ENCODE measurements at regions of chr3 and their contacts with region 1.

Region 1: DNA sequence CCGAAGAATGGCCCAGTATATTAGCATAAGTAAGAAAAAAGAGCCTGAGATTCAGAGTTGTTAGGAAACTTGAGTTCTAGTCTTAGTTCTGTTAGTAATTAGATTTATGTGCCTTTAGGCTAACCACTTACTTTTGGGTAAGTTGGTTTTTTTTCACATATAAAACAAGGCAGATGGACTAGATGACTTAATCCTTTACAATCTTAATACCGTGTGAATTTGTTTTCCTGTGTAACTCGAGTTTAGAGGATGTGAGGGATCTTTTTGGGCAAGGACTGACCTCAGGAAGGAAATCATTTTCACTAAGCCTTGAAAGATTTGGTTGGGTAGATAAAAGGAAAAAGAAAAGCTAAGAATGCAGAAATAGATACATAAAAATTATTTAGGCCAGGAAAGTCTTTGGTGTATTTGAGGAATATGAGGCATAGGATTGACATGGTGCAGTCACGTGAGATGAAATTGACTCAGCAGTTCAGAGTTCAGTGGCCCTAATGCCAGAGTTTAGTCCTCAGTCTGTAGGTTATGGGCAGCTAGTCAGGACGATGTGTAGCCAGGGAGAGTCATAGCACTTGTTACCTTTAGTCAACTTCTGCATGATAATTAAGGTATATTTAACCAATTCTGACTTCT is 34.6 kb downstream of the PAK2 start:
- DNase-seq: peak in 1 of 14 experiments; percentile 27
- ATAC-seq: no peak
- H3K4me3 ChIP-seq: no peak overlapping the region
- H3K4me3 Mint-ChIP-seq: peak overlapping the region; percentile 9
- H3K27ac ChIP-seq: no peak overlapping the region
- H3K27ac Mint-ChIP-seq: peak overlapping the region; percentile 35
- H3K4me1 ChIP-seq: peaks cover 33% of the 10 kb centered on the region
- H3K4me1 Mint-ChIP-seq: peaks cover 83% of the 10 kb centered on the region
- H3K27me3 ChIP-seq: no peaks in the 10 kb centered on the region
- H3K27me3 Mint-ChIP-seq: no peaks in the 10 kb centered on the region
- CTCF ChIP-seq: no peak

Region 2: DNA sequence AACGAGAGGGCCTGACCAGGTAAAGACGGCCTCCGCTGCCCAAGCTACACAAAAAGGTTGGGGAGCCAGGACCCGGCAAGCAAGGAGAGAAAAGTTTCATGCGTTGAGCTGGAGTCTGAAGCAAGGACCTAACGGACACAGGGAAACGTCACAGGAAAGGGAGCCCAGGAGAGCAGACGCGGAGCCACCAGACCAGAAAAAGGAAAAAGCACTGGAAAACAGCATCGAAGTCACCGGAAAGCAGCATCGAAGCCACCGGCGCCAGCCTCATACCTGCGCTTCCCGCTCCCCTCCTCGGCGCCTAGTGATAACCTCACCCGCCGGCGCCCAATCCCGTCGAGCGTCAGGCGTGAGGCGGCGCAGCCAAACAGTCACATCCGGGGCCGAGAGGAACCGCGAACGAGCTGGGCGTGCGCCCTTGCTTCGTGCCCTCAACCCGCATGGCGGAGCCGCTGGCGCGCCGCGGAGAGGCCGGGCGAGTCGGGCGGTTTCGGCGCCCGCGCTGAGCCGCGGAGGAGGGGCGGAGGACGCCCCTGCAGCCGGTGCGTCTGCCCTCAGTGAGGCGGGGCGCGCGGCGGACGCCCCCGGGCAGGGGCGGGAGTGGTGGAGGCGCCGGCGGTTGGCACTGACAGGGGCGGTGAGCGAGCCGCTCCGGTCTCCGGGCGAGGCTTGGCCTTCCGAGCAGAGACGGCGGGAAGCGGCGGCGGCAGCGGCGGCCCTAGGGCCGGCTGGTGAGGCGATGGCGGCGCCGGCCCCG is 205.9 kb before region 1 on chr3 and contains the starts of genes FBXO45 and WDR53:
- CTCF ChIA-PET with region 1: no interaction called
- POLR2A ChIA-PET with region 1: no interaction called
- intact Hi-C with region 1: no loop called
- DNase-seq: peak; percentile 90 to 99 (median 94)
- ATAC-seq: peak; percentile 90
- H3K4me3 ChIP-seq: peak within 1 kb of the TSS; percentile 76
- H3K4me3 Mint-ChIP-seq: peak within 1 kb of the TSS; percentile 98
- H3K27ac ChIP-seq: peak within 1 kb of the TSS; percentile 77 to 81
- H3K27ac Mint-ChIP-seq: peak within 1 kb of the TSS; percentile 97
- H3K4me1 ChIP-seq: peaks cover 47% of the 10 kb centered on the region
- H3K4me1 Mint-ChIP-seq: peaks cover 48% of the 10 kb centered on the region
- H3K27me3 ChIP-seq: no peaks in the 10 kb centered on the region
- H3K27me3 Mint-ChIP-seq: no peaks in the 10 kb centered on the region
- CTCF ChIP-seq: no peak
- total RNA-seq, gene FBXO45: 5.4 to 6.0 TPM
- total RNA-seq, gene WDR53: 18.4 to 20.9 TPM

Region 3: DNA sequence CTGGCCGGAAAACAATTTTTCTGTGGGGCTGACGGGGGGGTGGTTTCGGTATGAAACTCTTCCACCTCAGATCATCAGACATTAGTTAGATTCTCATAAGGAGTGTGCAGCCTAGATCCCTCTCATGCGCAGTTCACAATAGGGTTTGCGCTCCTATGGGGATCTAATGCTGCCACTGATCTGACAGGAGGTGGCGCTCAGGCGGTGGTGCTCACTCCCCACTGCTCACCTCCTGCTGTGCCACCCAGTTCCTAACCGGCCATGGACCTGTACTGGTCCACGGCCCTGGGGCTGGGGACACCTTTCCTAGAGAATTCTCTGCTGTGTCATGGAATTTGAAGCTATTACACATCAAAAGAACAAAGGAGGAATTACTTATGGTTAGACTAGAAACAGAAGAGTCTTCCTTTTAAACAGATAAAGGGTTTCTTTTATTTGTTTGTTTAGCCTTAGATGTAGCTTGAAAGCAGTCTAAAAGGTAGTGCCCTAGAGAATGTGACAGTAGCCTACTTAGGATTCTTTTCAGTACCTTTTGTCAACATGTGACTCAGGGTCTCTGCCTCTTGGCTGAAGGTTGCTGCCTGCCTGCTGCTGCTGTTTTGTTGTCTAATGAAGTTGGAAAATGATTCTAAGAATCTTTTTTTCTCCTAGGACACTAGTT is 15.6 kb after region 1 on chr3:
- CTCF ChIA-PET with region 1: no interaction called
- POLR2A ChIA-PET with region 1: no interaction called
- intact Hi-C with region 1: loop called in 1 of 2 experiments (anchors 2 kb)
- DNase-seq: no peak
- ATAC-seq: no peak
- H3K4me3 ChIP-seq: no peak overlapping the region
- H3K4me3 Mint-ChIP-seq: no peak overlapping the region
- H3K27ac ChIP-seq: no peak overlapping the region
- H3K27ac Mint-ChIP-seq: peak overlapping the region; percentile 27
- H3K4me1 ChIP-seq: no peaks in the 10 kb centered on the region
- H3K4me1 Mint-ChIP-seq: peaks cover 48% of the 10 kb centered on the region
- H3K27me3 ChIP-seq: no peaks in the 10 kb centered on the region
- H3K27me3 Mint-ChIP-seq: no peaks in the 10 kb centered on the region
- CTCF ChIP-seq: no peak

Measured in CD4-positive, alpha-beta T cell (primary cell).